ENCODE measurements at regions of chr18 and their contacts with region 1.

Region 1: DNA sequence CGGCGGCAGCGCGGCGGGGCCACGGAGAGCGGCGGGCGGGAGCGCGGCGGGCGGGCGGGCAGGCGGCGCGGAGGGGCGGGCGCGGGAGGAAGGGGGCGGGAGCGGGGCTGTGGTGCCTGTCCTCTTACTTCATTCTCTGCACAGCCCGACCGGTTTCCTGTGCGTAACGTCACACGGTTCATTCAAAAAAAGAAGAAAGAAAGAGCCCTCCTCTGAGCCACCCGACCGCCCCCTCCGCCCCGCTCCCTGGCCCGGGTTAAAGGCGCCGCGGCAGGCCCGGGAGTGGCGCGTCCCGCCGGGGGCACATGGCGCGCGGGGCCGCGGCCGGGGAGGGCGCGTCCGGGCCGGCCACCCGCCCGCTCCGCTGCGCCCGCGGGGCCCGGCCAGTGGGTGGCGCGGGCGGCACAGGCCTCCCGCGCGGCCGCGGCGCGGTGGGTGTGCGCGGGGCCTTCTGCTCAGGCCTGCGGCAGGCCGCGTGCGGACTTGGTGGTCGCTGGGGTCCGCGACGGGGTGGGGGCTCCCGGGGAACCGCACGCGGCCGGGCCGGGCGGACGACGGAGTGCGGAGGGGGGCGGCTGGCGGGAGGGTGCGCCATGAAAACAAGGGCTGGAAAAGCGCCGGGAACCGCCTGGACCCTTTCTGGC is 599 bp upstream of the BCL2 start:
- DNase-seq: peak; percentile 71 to 93 (median 90)
- ATAC-seq: peak; percentile 89
- H3K4me3 ChIP-seq: peak overlapping the region; percentile 61
- H3K4me3 Mint-ChIP-seq: peak overlapping the region; percentile 86 to 99 (median 94)
- H3K27ac ChIP-seq: peak overlapping the region; percentile 94
- H3K27ac Mint-ChIP-seq: peak overlapping the region; percentile 87 to 98 (median 94)
- H3K4me1 ChIP-seq: peaks cover 13 to 15% of the 10 kb centered on the region in 2 donors
- H3K4me1 Mint-ChIP-seq: peaks cover 21 to 45% (median 38%) of the 10 kb centered on the region in 7 donors
- H3K27me3 ChIP-seq: no peaks in the 10 kb centered on the region
- H3K27me3 Mint-ChIP-seq: no peaks in the 10 kb centered on the region

Region 2: DNA sequence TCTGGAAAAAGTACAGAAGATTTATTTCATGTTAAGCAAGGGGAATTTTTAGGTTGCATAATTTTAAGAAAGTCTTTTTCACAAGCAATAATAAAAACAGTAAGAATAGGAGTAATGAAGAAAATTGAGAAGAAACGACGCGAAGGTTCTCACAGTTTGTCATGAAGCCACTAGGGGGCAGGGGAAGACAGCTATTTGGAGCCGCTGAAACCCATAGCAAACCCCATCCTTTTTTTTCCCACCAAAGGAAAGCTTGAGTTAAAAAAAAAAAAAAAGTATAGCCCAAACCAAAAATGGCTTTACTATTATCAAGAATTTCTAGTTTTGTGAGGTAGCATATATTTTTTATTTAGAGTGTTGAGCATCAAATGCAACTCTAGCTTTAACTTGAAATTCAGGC is 303.9 kb before region 1 on chr18:
- CTCF ChIA-PET with region 1: interaction called, 57 read pairs
- POLR2A ChIA-PET with region 1: interaction called, 11 read pairs
- intact Hi-C with region 1: loop called in 1 of 2 experiments (anchors 1 kb)
- DNase-seq: peak in 7 of 9 donors; percentile 34 to 65 (median 56)
- ATAC-seq: peak; percentile 77
- H3K4me3 ChIP-seq: no peak overlapping the region
- H3K4me3 Mint-ChIP-seq: no peak overlapping the region
- H3K27ac ChIP-seq: no peak overlapping the region
- H3K27ac Mint-ChIP-seq: no peak overlapping the region
- H3K4me1 ChIP-seq: no peaks in the 10 kb centered on the region
- H3K4me1 Mint-ChIP-seq: peaks cover 0 to 2% (median 0%) of the 10 kb centered on the region in 7 donors
- H3K27me3 ChIP-seq: no peaks in the 10 kb centered on the region
- H3K27me3 Mint-ChIP-seq: peaks cover 7 to 61% (median 13%) of the 10 kb centered on the region in 5 donors

Region 3: DNA sequence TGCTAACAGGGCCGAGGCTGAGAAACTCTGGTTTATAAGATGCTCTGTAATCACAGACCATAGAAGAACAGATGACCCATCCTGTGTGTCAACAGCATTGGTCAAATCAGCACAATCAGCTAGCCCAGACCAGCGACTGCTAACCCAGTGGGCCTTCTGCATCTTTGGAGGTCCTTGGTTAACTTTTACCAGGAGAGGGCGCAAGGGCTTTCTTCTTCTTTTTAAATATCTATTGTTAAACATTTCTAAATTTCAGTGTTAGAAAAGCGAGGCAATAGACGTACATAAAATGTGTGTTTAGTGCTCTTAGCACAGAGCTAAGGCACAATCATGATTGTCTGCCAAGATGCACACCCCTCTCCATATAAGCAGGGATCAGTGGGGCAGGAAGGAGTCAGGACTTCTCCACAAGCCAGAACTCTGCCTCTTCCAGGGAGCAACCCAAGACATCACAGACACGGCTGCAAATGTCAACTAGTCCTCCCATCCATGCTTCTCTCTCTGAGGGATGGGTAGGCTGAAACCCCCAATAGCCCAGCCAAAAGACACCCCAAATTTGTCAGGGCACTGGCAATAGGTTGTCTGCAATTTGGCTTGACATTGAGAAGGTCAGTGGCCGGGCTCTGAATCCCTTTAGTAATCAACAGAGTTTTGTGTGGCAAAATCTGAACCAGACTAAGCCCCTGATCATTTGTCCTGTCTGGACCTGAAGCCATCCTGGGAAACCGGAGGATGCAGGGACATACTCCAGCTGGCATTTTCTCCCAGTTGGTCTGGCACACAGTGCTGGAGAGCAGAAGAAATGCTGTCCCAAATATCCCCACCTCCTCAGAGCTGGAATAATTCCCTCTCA is 188.8 kb before region 1 on chr18:
- CTCF ChIA-PET with region 1: interaction called, 88 read pairs
- POLR2A ChIA-PET with region 1: interaction called, 24 read pairs
- intact Hi-C with region 1: loop called (anchors 1 kb)
- DNase-seq: peak in 7 of 9 donors; percentile 51 to 71 (median 69)
- ATAC-seq: peak; percentile 80
- H3K4me3 ChIP-seq: no peak overlapping the region
- H3K4me3 Mint-ChIP-seq: peak overlapping the region in 9 of 10 donors; percentile 13 to 81 (median 45)
- H3K27ac ChIP-seq: peak overlapping the region; percentile 61
- H3K27ac Mint-ChIP-seq: peak overlapping the region in 8 of 9 donors; percentile 36 to 94 (median 83)
- H3K4me1 ChIP-seq: peaks cover 9 to 18% of the 10 kb centered on the region in 2 donors
- H3K4me1 Mint-ChIP-seq: peaks cover 28 to 58% (median 50%) of the 10 kb centered on the region in 7 donors
- H3K27me3 ChIP-seq: no peaks in the 10 kb centered on the region
- H3K27me3 Mint-ChIP-seq: no peaks in the 10 kb centered on the region

Region 4: GRCh38 chr18:63199743-63200241 is 120.4 kb before region 1 on chr18:
- CTCF ChIA-PET with region 1: interaction called, 20 read pairs
- POLR2A ChIA-PET with region 1: interaction called, 33 read pairs
- intact Hi-C with region 1: loop called (anchors 1 kb)
- DNase-seq: peak in 7 of 9 donors; percentile 57 to 82 (median 74)
- ATAC-seq: peak; percentile 84
- H3K4me3 ChIP-seq: peak overlapping the region; percentile 63
- H3K4me3 Mint-ChIP-seq: no peak overlapping the region
- H3K27ac ChIP-seq: peak overlapping the region; percentile 73
- H3K27ac Mint-ChIP-seq: no peak overlapping the region
- H3K4me1 ChIP-seq: peaks cover 37 to 71% of the 10 kb centered on the region in 2 donors
- H3K4me1 Mint-ChIP-seq: peaks cover 19 to 49% (median 33%) of the 10 kb centered on the region in 7 donors
- H3K27me3 ChIP-seq: no peaks in the 10 kb centered on the region
- H3K27me3 Mint-ChIP-seq: no peaks in the 10 kb centered on the region

Region 5: GRCh38 chr18:63253428-63254372 is 66.5 kb before region 1 on chr18:
- CTCF ChIA-PET with region 1: interaction called, 3 read pairs
- POLR2A ChIA-PET with region 1: interaction called, 6 read pairs
- intact Hi-C with region 1: loop called (anchors 5 kb)
- DNase-seq: no peak
- ATAC-seq: peak; percentile 74
- H3K4me3 ChIP-seq: no peak overlapping the region
- H3K4me3 Mint-ChIP-seq: peak overlapping the region in 8 of 10 donors; percentile 1 to 64 (median 32)
- H3K27ac ChIP-seq: no peak overlapping the region
- H3K27ac Mint-ChIP-seq: peak overlapping the region in 8 of 9 donors; percentile 9 to 79 (median 53)
- H3K4me1 ChIP-seq: peaks cover 7 to 25% of the 10 kb centered on the region in 2 donors
- H3K4me1 Mint-ChIP-seq: peaks cover 42 to 81% (median 73%) of the 10 kb centered on the region in 7 donors
- H3K27me3 ChIP-seq: no peaks in the 10 kb centered on the region
- H3K27me3 Mint-ChIP-seq: no peaks in the 10 kb centered on the region

Region 6: DNA sequence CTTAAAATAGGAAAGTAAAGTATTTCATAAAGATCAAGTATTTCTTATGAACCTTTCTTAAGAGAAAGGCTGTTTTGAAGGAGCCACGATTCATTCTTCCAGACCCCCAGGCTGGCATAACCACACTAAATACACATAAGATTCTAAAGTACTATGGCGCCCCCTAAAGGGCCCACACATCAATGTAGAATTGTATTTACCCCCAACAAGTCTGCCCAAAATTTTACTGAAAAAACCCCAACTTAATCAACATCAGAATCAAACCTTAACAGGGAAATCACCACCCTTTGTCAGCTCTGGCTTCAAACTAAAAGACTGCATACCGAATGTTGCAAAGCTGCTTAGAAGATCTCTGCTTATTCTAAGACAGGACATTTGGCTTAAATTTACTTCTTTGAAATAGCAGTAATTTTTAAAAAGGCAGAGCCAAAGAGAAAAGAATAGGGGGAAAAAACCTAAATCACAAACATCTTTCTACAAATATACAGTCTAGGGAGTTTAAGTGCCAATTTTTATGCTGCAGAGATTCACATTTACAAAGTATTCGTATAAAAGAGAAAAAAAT is 19.8 kb after region 1 on chr18:
- CTCF ChIA-PET with region 1: interaction called, 11 read pairs
- POLR2A ChIA-PET with region 1: no interaction called
- intact Hi-C with region 1: no loop called
- DNase-seq: peak in 7 of 9 donors; percentile 29 to 59 (median 51)
- ATAC-seq: peak; percentile 82
- H3K4me3 ChIP-seq: no peak overlapping the region
- H3K4me3 Mint-ChIP-seq: no peak overlapping the region
- H3K27ac ChIP-seq: no peak overlapping the region
- H3K27ac Mint-ChIP-seq: peak overlapping the region in 1 of 9 donors; percentile 29
- H3K4me1 ChIP-seq: no peaks in the 10 kb centered on the region
- H3K4me1 Mint-ChIP-seq: peaks cover 0 to 9% (median 5%) of the 10 kb centered on the region in 7 donors
- H3K27me3 ChIP-seq: no peaks in the 10 kb centered on the region
- H3K27me3 Mint-ChIP-seq: no peaks in the 10 kb centered on the region

Measured in naive thymus-derived CD4-positive, alpha-beta T cell (primary cell).